Colonic mucosa (tissue), 4 donors: ENCODE measurements at regions of chr13 and their contacts with region 1.

Region 1: DNA sequence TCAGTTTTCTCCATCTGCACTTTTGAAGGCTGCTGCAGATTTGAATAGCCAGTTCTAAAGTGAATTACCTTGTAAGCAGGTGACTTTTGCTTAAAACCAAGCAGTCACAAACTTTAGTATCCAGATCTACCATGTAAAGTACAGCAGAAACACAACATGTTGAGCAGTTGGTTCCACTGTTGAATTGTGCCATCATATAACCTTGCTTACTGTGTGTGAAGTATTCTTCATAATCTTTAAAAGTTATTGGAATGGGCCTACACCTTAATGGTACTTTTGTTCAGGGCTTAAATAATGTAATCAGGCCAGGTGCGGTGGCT is 23.2 kb upstream of the MTUS2 start:
- DNase-seq: no peak
- H3K4me3 ChIP-seq: no peak overlapping the region
- H3K27ac ChIP-seq: no peak overlapping the region
- H3K4me1 ChIP-seq: no peaks in the 10 kb centered on the region
- H3K27me3 ChIP-seq: peaks cover 10% of the 10 kb centered on the region
- CTCF ChIP-seq: no peak

Region 2: GRCh38 chr13:28324181-28324789 is 472.6 kb before region 1 on chr13:
- intact Hi-C with region 1: loop called (anchors 5 kb)
- DNase-seq: peak; percentile 71
- H3K4me3 ChIP-seq: no peak overlapping the region
- H3K27ac ChIP-seq: no peak overlapping the region
- H3K4me1 ChIP-seq: no peaks in the 10 kb centered on the region
- H3K27me3 ChIP-seq: no peaks in the 10 kb centered on the region
- CTCF ChIP-seq: peak; percentile 55

Region 3: GRCh38 chr13:28679628-28680027 is 117.3 kb before region 1 on chr13:
- intact Hi-C with region 1: loop called (anchors 2 kb)
- DNase-seq: no peak
- H3K4me3 ChIP-seq: no peak overlapping the region
- H3K27ac ChIP-seq: no peak overlapping the region
- H3K4me1 ChIP-seq: no peaks in the 10 kb centered on the region
- H3K27me3 ChIP-seq: no peaks in the 10 kb centered on the region
- CTCF ChIP-seq: peak; percentile 31